ENCODE measurements at regions of chr4 and their contacts with region 1.

Region 1: GRCh38 chr4:38062088-38062893 is 102.1 kb downstream of the PTTG2 start:
- H3K4me3 Mint-ChIP-seq: peak overlapping the region; percentile 68
- H3K27ac Mint-ChIP-seq: peak overlapping the region; percentile 69
- H3K4me1 Mint-ChIP-seq: peaks cover 28% of the 10 kb centered on the region
- H3K27me3 Mint-ChIP-seq: no peaks in the 10 kb centered on the region

Region 2: GRCh38 chr4:37510626-37511025 is 551.7 kb before region 1 on chr4:
- intact Hi-C with region 1: no loop called
- H3K4me3 Mint-ChIP-seq: no peak overlapping the region
- H3K27ac Mint-ChIP-seq: no peak overlapping the region
- H3K4me1 Mint-ChIP-seq: no peaks in the 10 kb centered on the region
- H3K27me3 Mint-ChIP-seq: peaks cover 2% of the 10 kb centered on the region

Region 3: DNA sequence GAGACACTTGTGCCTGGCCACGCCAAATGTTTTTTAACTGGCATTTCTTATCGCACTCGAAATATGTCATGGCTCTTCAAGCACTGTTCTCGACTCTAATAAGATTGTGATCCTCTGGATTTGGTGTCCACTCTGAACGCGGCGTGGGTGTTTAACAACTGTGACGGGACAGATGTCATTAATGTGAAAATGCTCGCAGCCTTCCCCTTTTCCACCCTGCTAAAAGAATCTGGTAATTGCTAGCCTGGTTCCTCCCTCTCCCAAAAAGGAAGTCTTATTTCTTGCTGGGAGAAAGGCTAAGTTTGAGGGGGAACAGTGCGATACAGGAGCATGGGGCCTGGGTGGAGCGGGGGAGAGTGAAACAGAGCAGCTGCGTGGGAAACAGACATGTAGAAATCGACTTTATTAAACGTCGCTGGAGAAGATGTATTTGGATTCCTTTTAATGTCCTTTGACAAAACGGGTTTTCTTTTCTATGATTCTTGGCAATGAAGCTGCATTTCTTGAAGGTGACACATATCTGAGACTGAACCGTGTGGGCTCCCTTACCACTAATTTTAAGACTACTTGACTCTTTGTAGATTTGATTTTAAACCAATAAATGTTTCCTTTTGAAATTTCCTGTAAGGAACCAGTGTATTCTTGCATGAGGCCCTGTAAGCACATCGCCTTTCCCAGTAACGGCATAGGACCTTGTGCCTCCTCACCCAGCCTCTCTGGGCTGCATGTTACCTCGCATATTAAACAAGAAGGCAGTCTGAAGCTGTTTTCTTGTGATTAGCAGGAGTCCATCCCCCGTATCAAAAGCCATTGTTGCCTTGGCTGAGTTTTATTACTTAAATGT is 153.6 kb before region 1 on chr4:
- intact Hi-C with region 1: no loop called
- H3K4me3 Mint-ChIP-seq: no peak overlapping the region
- H3K27ac Mint-ChIP-seq: peak overlapping the region; percentile 71
- H3K4me1 Mint-ChIP-seq: peaks cover 26% of the 10 kb centered on the region
- H3K27me3 Mint-ChIP-seq: no peaks in the 10 kb centered on the region

Region 4: GRCh38 chr4:38119668-38120385 is 57.5 kb after region 1 on chr4:
- intact Hi-C with region 1: loop called (anchors 10 kb)
- H3K4me3 Mint-ChIP-seq: no peak overlapping the region
- H3K27ac Mint-ChIP-seq: no peak overlapping the region
- H3K4me1 Mint-ChIP-seq: peaks cover 23% of the 10 kb centered on the region
- H3K27me3 Mint-ChIP-seq: no peaks in the 10 kb centered on the region

Region 5: DNA sequence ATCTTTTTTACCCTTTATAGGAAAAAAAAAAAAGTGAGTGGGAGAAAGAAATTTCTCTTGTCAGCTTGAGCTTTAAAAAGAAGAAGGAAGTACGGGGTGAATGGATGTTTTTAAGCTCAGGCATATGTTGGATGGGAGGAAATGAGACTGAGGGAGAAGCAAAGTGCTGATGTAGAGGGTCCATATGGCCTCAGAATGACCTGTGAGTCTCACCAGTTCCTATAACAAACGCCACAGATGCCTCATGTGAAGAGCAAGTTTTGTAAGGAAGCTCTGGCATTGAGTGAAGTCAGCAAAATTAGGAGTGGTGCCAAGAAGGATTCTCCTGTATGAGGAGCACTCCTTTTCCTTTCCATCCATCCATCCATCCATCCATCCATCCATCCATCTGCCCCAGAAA is 112.5 kb after region 1 on chr4:
- intact Hi-C with region 1: loop called (anchors 2 kb)
- H3K4me3 Mint-ChIP-seq: peak overlapping the region; percentile 9
- H3K27ac Mint-ChIP-seq: peak overlapping the region; percentile 83
- H3K4me1 Mint-ChIP-seq: peaks cover 66% of the 10 kb centered on the region
- H3K27me3 Mint-ChIP-seq: peaks cover 5% of the 10 kb centered on the region

Region 6: DNA sequence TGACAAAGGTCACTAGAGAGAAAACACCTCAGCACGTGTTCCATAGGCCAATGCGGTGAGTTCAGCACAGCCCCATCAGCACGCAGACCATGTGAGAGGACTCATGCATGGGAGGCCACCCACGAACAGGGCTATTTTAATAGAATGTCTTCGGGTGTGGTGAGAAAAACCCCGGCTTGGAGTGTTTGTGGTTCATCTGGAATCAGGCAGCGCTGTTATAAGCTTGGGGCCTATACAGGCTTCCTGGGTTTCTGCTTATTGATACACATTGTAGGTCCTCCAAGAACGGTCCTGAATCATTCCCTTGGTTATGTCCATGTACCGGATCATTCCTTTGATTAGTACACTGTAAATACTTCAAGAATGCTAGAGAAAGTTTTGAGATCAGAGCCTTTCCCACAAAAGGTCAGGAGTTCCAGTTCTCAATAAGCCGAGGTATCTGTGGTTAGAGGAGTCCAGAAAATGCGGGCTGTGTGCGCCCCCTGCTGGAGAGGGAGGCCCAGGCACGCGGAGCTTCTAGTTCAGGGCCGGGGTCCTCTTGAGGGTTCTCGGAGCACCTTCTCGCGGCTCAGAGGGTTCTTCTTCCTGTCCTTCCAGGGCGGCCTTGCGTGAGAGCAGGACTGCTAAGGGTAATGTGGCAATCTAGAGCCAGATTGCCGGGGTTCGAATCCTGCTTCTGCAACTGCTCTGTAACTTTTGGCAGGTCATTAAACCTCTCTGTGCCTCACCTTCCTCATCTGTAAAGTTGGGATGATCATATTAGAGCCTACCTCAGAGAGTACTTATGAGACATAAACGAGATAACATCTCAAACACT is 668.7 kb after region 1 on chr4:
- intact Hi-C with region 1: loop called (anchors 1 kb)
- H3K4me3 Mint-ChIP-seq: no peak overlapping the region
- H3K27ac Mint-ChIP-seq: peak overlapping the region; percentile 39
- H3K4me1 Mint-ChIP-seq: peaks cover 42% of the 10 kb centered on the region
- H3K27me3 Mint-ChIP-seq: no peaks in the 10 kb centered on the region